ENCODE measurements at regions of chr2 and their contacts with region 1.

Region 1: DNA sequence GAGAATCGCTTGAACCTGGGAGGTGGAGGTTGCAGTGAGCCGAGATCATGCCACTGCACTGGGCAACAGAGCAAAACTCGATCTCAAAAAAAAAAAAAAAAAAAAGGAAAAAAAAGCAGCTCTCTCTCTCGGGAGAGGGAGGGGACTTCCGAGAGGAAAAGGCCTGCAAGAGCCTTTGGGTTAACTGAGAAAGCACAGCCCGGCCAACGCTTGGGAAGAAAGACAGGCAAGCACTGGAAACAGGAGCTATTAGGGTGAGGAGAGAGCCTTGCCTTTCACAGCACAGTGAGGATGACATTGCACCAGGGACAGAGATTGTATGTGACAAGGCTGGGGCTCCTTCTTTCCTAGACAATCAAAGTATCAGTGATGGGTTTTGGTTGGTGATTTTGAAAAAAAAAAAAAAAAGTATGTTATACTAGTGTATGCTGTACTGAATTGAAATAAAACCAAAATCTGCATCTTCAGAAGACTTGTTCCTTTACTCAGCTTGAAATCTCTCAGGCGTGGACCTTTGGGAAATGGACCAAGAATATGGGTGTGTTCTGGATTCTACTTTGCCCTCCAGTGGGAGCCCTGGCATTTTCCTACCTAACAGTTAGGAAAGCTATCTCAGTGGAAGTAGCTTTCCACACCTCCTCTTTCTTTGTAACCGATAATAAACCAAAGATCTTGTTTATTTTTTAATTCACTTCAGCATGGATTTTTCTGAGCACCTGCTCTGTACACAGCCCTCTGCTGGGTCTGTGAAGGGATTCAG is 16.7 kb downstream of the SRSF7 start:
- DNase-seq: peak in 2 of 3 donors; percentile 59 to 66
- ATAC-seq: peak; percentile 47 to 67
- H3K4me3 ChIP-seq: no peak overlapping the region
- H3K27ac ChIP-seq: no peak overlapping the region
- H3K4me1 ChIP-seq: peaks cover 2% of the 10 kb centered on the region
- H3K27me3 ChIP-seq: no peaks in the 10 kb centered on the region

Region 2: GRCh38 chr2:38218591-38218991 is 515.9 kb before region 1 on chr2:
- intact Hi-C with region 1: no loop called
- DNase-seq: no peak
- ATAC-seq: no peak
- H3K4me3 ChIP-seq: no peak overlapping the region
- H3K27ac ChIP-seq: no peak overlapping the region
- H3K4me1 ChIP-seq: peaks cover 2% of the 10 kb centered on the region
- H3K27me3 ChIP-seq: no peaks in the 10 kb centered on the region

Region 3: DNA sequence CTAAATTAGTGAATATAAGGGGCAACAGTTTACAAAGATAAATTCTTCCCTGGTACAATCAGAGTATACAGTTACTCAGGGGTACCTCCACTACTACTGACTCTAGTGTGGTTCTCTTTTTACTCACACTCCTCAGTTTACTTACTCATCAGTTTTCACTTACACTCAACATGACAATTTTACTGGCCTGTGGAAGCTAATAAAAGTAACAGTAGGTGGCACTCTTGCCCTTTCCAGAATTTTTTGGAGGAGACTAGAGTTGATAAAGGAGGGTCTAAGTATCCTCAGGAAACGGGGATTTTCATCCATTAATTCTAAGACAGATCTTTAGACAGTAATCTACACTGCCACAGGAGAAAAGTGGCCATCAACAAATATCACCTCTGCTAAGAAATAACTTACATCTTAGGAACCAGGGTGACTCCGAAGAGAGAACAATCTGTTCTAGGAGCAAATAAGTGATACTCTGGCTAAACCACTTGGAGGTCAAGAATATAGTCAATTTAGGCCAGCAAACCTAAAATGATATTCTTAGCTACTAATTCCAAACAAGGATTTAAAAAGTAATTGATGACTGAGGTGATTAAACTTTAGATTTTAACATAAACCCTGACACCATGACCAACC is 418.7 kb before region 1 on chr2:
- intact Hi-C with region 1: loop called in 3 of 4 experiments (anchors 5 to 10 kb)
- DNase-seq: no peak
- ATAC-seq: peak; percentile 60 to 72
- H3K4me3 ChIP-seq: no peak overlapping the region
- H3K27ac ChIP-seq: no peak overlapping the region
- H3K4me1 ChIP-seq: no peaks in the 10 kb centered on the region
- H3K27me3 ChIP-seq: no peaks in the 10 kb centered on the region

Region 4: GRCh38 chr2:38323623-38324022 is 410.9 kb before region 1 on chr2:
- intact Hi-C with region 1: loop called in 3 of 4 experiments (anchors 5 to 10 kb)
- DNase-seq: no peak
- ATAC-seq: peak in 1 of 2 donors; percentile 38
- H3K4me3 ChIP-seq: no peak overlapping the region
- H3K27ac ChIP-seq: no peak overlapping the region
- H3K4me1 ChIP-seq: peaks cover 2% of the 10 kb centered on the region
- H3K27me3 ChIP-seq: no peaks in the 10 kb centered on the region

Region 5: GRCh38 chr2:38535744-38536506 is 198.6 kb before region 1 on chr2:
- intact Hi-C with region 1: loop called in 1 of 4 experiments (anchors 10 kb)
- DNase-seq: peak; percentile 88 to 96 (median 93)
- ATAC-seq: peak; percentile 94 to 95
- H3K4me3 ChIP-seq: peak overlapping the region; percentile 56
- H3K27ac ChIP-seq: no peak overlapping the region
- H3K4me1 ChIP-seq: no peaks in the 10 kb centered on the region
- H3K27me3 ChIP-seq: no peaks in the 10 kb centered on the region

Region 6: DNA sequence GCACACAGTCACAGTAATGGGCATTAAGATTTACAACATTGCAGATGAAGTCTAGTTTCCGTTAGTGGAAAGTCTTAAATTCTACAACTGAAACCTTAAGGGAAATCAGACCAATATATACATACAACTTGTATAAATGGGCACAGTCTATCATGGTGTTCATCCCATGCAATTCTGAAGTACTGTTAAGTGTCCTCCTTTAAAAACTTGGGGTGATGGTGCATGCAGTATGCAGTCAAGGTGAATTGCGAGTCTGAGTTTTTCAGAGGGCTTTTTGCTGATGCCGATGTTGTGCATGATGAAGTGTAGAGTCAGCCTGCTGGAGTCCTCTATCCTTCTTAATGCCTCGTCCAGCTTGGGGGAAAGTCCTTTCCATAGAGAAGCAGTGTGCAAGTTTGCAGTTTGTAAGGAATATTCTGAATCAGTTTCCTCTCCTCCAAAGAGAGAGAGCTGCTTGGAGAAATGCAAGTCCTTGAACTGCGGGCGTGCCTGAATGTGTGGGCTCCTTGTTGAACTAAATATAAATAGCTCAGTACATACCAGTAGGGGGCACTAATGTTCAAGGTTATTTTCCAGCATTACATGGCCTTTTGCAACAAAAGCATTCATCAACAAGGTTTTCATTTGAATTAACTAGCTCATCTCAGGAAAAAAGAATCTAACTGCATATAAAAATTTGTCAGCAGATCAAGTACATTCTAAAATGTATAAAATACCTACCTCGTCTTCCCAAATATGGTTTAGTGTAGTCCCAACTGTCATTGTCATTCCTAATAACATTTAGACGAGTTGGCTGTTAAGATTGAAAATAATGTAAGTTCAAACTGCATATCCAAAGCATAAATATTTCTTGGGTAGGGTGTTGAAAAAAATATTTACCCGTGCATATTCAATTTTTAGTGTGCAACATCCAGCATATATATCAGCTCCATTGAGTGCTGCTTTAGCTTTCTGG is 153.0 kb before region 1 on chr2:
- intact Hi-C with region 1: loop called (anchors 5 kb)
- DNase-seq: peak in 1 of 3 donors; percentile 53
- ATAC-seq: peak; percentile 79 to 80
- H3K4me3 ChIP-seq: no peak overlapping the region
- H3K27ac ChIP-seq: no peak overlapping the region
- H3K4me1 ChIP-seq: peaks cover 1% of the 10 kb centered on the region
- H3K27me3 ChIP-seq: no peaks in the 10 kb centered on the region

Region 7: GRCh38 chr2:38778687-38779082 is 44.2 kb after region 1 on chr2:
- intact Hi-C with region 1: no loop called
- DNase-seq: no peak
- ATAC-seq: no peak
- H3K4me3 ChIP-seq: peak overlapping the region; percentile 98
- H3K27ac ChIP-seq: no peak overlapping the region
- H3K4me1 ChIP-seq: peaks cover 1% of the 10 kb centered on the region
- H3K27me3 ChIP-seq: no peaks in the 10 kb centered on the region

Measured in right cardiac atrium (tissue), 5 donors.